Transverse colon (tissue), 4 donors: ENCODE measurements at regions of chr22 and their contacts with region 1.

Region 1: DNA sequence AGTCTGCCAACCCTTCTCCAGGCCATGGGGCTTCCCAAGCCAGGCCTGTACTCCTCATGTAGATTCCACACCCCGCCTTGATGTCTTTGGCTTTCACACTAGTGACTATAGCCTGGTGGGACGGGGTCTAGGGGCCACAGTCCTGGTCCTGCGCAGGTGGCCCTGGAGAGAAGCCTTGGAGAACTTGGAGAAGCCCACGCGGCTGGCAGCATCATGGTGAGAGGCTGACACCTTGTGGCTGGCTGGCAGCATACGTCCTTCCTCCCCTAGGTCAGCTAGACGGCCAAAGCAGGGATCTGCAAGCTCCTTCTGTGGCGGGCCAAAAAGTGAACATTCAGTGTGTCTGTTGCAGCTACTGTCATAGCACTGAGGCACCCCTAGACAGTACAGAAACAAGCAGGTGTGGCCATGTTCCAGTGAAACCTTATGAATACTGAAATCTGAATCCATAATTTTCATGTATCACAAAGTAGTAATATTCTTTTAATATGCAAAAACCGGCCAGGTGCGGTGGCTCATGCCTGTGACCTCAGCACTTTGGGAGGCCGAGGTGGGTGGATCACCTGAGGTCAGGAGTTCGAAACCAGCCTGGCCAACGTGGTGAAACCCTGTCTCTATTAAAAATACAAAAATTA is 42.0 kb downstream of the FAM83F start:
- DNase-seq: peak; percentile 68
- H3K4me3 ChIP-seq: no peak overlapping the region
- H3K27ac ChIP-seq: no peak overlapping the region
- H3K4me1 ChIP-seq: peaks cover 0 to 7% (median 0%) of the 10 kb centered on the region in 4 donors
- H3K27me3 ChIP-seq: peaks cover 3% of the 10 kb centered on the region
- CTCF ChIP-seq: peak; percentile 46 to 63 (median 52)
- EP300 ChIP-seq: no peak
- POLR2A ChIP-seq: no peak

Region 2: DNA sequence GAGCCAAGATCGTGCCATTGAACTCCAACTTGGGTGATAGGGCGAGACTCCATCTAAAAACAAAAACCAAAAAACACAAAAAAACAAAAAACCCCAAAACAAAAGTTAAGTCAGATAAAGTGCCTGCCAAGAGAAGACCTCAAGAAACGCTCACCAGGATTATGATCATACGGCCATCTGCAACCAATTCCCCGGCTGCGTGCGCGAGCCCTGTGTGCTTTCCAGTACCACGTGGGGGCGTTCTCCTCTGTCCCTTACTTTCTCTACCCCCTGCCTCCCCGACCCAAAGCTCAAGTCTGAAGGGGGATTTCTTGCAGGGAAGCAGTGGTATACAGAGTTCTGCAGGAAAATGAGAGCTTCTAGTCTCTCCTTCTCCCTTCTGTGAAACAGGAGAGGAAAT is 493.6 kb before region 1 on chr22:
- in situ Hi-C with region 1: loop called (anchors 5 to 10 kb)
- intact Hi-C with region 1: no loop called
- DNase-seq: no peak
- H3K4me3 ChIP-seq: no peak overlapping the region
- H3K27ac ChIP-seq: no peak overlapping the region
- H3K4me1 ChIP-seq: no peaks in the 10 kb centered on the region
- H3K27me3 ChIP-seq: peaks cover 37% of the 10 kb centered on the region
- CTCF ChIP-seq: peak in 2 of 5 experiments; percentile 8 to 17
- EP300 ChIP-seq: no peak
- POLR2A ChIP-seq: no peak

Region 3: GRCh38 chr22:40116496-40117200 is 79.9 kb after region 1 on chr22:
- in situ Hi-C with region 1: no loop called
- intact Hi-C with region 1: no loop called
- DNase-seq: no peak
- H3K4me3 ChIP-seq: no peak overlapping the region
- H3K27ac ChIP-seq: no peak overlapping the region
- H3K4me1 ChIP-seq: peaks cover 0 to 2% (median 0%) of the 10 kb centered on the region in 4 donors
- H3K27me3 ChIP-seq: no peaks in the 10 kb centered on the region
- CTCF ChIP-seq: no peak
- EP300 ChIP-seq: no peak
- POLR2A ChIP-seq: no peak